Ovary (tissue), 10 donors: ENCODE measurements at regions of chr4 and their contacts with region 1.

Region 1: GRCh38 chr4:76696109-76696508 is 201.8 kb downstream of the SOWAHB start:
- DNase-seq: no peak
- H3K4me3 ChIP-seq: no peak overlapping the region
- H3K27ac ChIP-seq: no peak overlapping the region
- H3K4me1 ChIP-seq: no peaks in the 10 kb centered on the region
- H3K27me3 ChIP-seq: no peaks in the 10 kb centered on the region
- CTCF ChIP-seq: no peak
- EP300 ChIP-seq: no peak
- POLR2A ChIP-seq: no peak

Region 2: GRCh38 chr4:76558396-76559232 is 137.5 kb before region 1 on chr4:
- intact Hi-C with region 1: loop called in 1 of 4 experiments (anchors 5 kb)
- DNase-seq: no peak
- H3K4me3 ChIP-seq: no peak overlapping the region
- H3K27ac ChIP-seq: no peak overlapping the region
- H3K4me1 ChIP-seq: no peaks in the 10 kb centered on the region
- H3K27me3 ChIP-seq: no peaks in the 10 kb centered on the region
- CTCF ChIP-seq: no peak
- EP300 ChIP-seq: no peak
- POLR2A ChIP-seq: no peak

Region 3: GRCh38 chr4:76984127-76984526 is 288.0 kb after region 1 on chr4:
- intact Hi-C with region 1: no loop called
- DNase-seq: no peak
- H3K4me3 ChIP-seq: no peak overlapping the region
- H3K27ac ChIP-seq: peak overlapping the region in 1 of 2 donors; percentile 42
- H3K4me1 ChIP-seq: peaks cover 19% of the 10 kb centered on the region
- H3K27me3 ChIP-seq: no peaks in the 10 kb centered on the region
- CTCF ChIP-seq: peak in 1 of 3 donors; percentile 15
- EP300 ChIP-seq: no peak
- POLR2A ChIP-seq: no peak